AG04450 (cell line): ENCODE measurements at regions of chr10 and their contacts with region 1.

Region 1: GRCh38 chr10:124717911-124718741 is 26.1 kb downstream of the FAM53B start:
- DNase-seq: no peak
- H3K4me3 ChIP-seq: no peak overlapping the region
- H3K27ac ChIP-seq: no peak overlapping the region
- H3K27me3 ChIP-seq: no peaks in the 10 kb centered on the region
- CTCF ChIP-seq: no peak

Region 2: GRCh38 chr10:124470544-124471434 is 247.3 kb before region 1 on chr10:
- CTCF ChIA-PET with region 1: no interaction called
- POLR2A ChIA-PET with region 1: interaction called, 13 read pairs
- DNase-seq: no peak
- H3K4me3 ChIP-seq: no peak overlapping the region
- H3K27ac ChIP-seq: no peak overlapping the region
- H3K27me3 ChIP-seq: no peaks in the 10 kb centered on the region
- CTCF ChIP-seq: no peak

Region 3: GRCh38 chr10:124647421-124648130 is 70.5 kb before region 1 on chr10:
- CTCF ChIA-PET with region 1: no interaction called
- POLR2A ChIA-PET with region 1: no interaction called
- DNase-seq: no peak
- H3K4me3 ChIP-seq: no peak overlapping the region
- H3K27ac ChIP-seq: peak overlapping the region; percentile 39
- H3K27me3 ChIP-seq: no peaks in the 10 kb centered on the region
- CTCF ChIP-seq: peak; percentile 23; the same call in 1 of the 2 replicates

Region 4: DNA sequence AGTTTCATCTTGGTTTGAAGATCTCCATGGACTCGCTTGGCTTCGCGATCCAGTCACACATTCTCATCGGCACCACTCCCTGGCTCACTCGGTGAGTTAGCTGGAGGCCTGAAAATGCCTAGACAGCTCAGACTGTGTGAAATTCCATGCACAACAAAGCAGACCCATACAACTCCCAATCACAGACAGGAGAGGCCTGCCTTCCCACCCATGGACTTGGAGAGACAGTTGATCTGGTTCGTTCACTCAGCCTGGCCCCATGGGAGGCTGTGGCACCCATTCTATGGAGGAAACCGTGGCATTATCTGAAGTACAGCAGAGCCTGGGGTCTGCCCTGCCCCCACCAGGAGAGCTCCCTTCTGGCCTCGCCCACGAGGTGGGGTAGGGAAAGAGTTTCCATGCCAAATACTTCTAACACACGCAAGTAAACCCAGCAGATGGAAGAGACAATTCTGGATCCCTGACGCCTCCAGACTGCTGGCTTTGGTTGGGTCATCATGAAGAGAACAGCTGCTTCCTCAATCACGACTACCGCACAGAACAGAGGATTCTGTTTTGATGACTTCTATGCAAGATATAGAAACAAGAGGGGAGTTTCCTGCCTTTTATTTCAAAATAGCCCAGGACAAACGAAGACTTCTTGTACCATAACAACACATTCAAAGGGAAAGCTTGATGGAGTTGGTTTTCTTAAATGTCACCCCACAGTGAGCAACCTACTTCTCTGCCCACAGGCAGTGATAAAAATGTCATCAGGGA is 10.1 kb after region 1 on chr10:
- CTCF ChIA-PET with region 1: no interaction called
- POLR2A ChIA-PET with region 1: no interaction called
- DNase-seq: no peak
- H3K4me3 ChIP-seq: no peak overlapping the region
- H3K27ac ChIP-seq: no peak overlapping the region
- H3K27me3 ChIP-seq: no peaks in the 10 kb centered on the region
- CTCF ChIP-seq: no peak